Activated CD4-positive, alpha-beta T cell treated with anti-CD3 and anti-CD28 coated beads for 36 hours (primary cell): ENCODE measurements at regions of chr15 and their contacts with region 1.

Region 1: DNA sequence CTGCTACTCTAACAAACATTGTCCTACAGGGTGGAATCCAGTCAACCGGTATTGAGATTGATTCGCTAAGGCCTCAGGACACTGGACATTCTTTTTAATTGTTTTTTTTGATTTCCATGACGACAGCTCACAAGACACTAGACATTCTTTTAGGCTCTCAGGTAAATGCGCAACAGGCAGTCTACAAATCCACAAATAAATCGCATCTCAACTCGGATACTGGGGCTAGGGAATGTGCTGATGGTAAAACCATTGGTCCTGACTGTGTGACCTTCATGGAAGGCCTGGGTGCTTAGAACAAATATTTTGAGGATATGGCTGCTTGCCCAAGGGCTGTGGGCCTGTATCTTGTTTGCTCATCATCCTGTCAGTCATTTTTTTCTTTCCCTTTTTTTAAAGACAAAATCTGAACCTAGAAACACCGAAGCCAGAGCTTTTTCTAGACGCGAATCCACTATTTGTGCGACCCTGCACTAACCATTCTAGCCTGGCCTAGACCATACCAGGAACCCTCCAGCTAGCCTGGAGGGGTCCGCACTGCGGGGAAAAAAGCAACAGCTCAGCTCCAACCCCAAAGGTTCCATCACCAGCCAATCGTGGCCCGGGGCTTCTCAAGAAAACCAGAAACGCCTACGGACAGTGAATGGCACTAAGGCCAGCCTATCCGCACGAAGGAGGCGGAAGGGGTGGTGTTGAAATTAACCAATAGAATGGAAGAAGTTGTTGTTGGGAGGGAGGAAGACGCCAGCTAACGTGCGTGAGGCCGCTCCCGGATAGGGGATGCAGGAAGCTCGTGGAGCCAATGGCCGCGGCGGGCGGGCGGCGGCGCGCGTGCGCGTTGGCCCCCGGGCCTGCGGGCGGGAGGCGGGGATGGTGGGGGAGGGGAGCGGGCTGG is 18.1 kb upstream of the CHD2 start:
- DNase-seq: peak; percentile 98
- ATAC-seq: peak; percentile 93
- H3K4me3 Mint-ChIP-seq: peak overlapping the region; percentile 84
- H3K27ac Mint-ChIP-seq: peak overlapping the region; percentile 96
- H3K4me1 Mint-ChIP-seq: peaks cover 48% of the 10 kb centered on the region
- H3K27me3 Mint-ChIP-seq: no peaks in the 10 kb centered on the region

Region 2: GRCh38 chr15:92803847-92804609 is 78.0 kb before region 1 on chr15:
- CTCF ChIA-PET with region 1: interaction called, 45 read pairs
- POLR2A ChIA-PET with region 1: interaction called, 86 read pairs
- intact Hi-C with region 1: loop called (anchors 1 kb)
- DNase-seq: peak; percentile 91
- ATAC-seq: peak; percentile 86
- H3K4me3 Mint-ChIP-seq: peak overlapping the region; percentile 17
- H3K27ac Mint-ChIP-seq: peak overlapping the region; percentile 94
- H3K4me1 Mint-ChIP-seq: peaks cover 36% of the 10 kb centered on the region
- H3K27me3 Mint-ChIP-seq: no peaks in the 10 kb centered on the region

Region 3: DNA sequence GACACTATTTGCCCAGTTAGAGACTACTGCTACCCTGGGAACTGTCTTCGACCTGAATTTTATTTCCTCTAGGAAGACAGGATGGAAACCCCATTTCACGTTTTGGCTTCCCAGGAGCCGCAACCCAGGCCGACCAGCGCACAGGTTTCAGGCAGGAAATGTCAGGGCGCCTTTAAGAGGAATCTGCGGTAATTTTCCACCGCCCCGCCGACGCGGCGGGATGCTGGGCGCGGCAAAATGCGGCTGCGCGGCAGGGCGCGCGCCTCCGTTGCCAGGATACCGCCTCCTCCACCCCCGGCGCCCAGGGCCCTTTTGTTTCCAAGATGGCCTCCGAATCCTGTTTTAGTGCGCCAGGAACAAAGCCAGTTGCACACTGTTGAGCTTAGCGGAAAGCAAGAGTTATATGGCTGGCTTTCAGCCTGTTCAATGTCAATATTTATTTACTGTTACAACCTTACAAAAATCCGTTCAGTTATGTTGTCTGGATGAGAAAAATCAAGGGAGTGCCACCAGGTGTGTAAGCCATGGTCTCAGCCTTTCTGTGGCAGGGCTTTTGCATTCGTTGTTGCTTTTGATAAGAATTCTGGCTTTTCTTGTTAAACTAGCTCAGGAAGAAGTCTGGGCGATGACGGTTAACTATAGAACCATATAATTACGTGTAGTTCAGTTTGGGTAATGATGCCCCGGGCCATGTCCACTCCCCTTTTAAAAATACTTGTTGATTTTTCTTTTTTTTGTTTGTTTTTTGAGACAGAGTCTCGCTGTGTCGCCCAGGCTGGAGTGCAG is 61.6 kb before region 1 on chr15:
- CTCF ChIA-PET with region 1: interaction called, 14 read pairs
- POLR2A ChIA-PET with region 1: interaction called, 31 read pairs
- intact Hi-C with region 1: loop called (anchors 1 kb)
- DNase-seq: peak; percentile 92
- ATAC-seq: peak; percentile 63
- H3K4me3 Mint-ChIP-seq: peak overlapping the region; percentile 82
- H3K27ac Mint-ChIP-seq: peak overlapping the region; percentile 77
- H3K4me1 Mint-ChIP-seq: peaks cover 64% of the 10 kb centered on the region
- H3K27me3 Mint-ChIP-seq: no peaks in the 10 kb centered on the region

Region 4: GRCh38 chr15:92845126-92845508 is 36.9 kb before region 1 on chr15:
- CTCF ChIA-PET with region 1: interaction called, 4 read pairs
- POLR2A ChIA-PET with region 1: interaction called, 27 read pairs
- intact Hi-C with region 1: loop called (anchors 1 kb)
- DNase-seq: no peak
- ATAC-seq: peak; percentile 43
- H3K4me3 Mint-ChIP-seq: peak overlapping the region; percentile 57
- H3K27ac Mint-ChIP-seq: peak overlapping the region; percentile 99
- H3K4me1 Mint-ChIP-seq: peaks cover 79% of the 10 kb centered on the region
- H3K27me3 Mint-ChIP-seq: no peaks in the 10 kb centered on the region

Region 5: GRCh38 chr15:92868992-92869988 is 12.8 kb before region 1 on chr15:
- CTCF ChIA-PET with region 1: interaction called, 10 read pairs
- POLR2A ChIA-PET with region 1: no interaction called
- intact Hi-C with region 1: no loop called
- DNase-seq: no peak
- ATAC-seq: no peak
- H3K4me3 Mint-ChIP-seq: no peak overlapping the region
- H3K27ac Mint-ChIP-seq: no peak overlapping the region
- H3K4me1 Mint-ChIP-seq: no peaks in the 10 kb centered on the region
- H3K27me3 Mint-ChIP-seq: no peaks in the 10 kb centered on the region

Region 6: DNA sequence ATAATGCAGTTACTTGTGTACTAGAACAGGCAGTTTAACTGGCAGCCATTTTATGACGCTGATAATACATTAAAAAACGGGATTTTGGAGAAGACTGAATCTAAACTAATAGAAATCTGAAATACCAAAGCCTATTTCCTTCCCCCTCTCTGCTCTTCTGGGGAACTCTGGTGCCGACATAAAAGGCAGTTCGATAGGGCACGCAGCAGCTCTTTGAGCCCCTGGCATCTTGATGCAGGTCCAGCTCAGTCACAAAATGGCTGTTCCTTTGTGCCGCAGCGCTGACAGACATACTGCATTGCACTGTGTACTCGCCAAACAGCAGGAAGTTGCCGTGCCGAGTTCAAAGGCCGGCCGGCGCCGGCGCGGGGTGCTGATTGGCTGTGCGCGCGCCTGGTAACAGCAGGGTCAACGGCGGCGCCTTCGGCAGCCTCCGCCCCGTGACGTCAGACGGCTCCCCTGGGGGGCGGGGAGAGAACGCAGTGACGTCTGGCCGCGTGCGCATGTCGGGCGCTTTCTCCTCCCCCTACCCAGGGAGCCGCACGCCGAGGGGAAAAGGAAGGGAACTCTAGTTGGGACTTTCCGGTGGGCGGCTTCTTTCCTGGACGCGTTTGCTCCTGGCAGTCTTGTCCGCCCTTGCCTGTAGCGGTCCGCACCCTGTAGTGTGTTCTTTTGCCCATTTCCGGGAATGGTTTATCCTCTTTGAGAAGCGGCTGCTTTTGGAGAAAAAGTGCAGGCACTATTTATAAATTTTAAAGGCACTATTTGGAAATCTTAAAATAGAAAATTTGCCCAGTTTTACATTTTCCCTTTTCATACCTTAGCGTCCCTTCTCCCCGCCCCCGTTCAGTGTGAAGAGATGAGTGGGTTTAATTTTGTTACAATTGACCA is 22.1 kb after region 1 on chr15:
- CTCF ChIA-PET with region 1: interaction called, 61 read pairs
- POLR2A ChIA-PET with region 1: interaction called, 111 read pairs
- intact Hi-C with region 1: loop called (anchors 1 kb)
- DNase-seq: peak; percentile 100
- ATAC-seq: peak; percentile 80
- H3K4me3 Mint-ChIP-seq: peak overlapping the region; percentile 81
- H3K27ac Mint-ChIP-seq: peak overlapping the region; percentile 98
- H3K4me1 Mint-ChIP-seq: peaks cover 48% of the 10 kb centered on the region
- H3K27me3 Mint-ChIP-seq: no peaks in the 10 kb centered on the region

Region 7: GRCh38 chr15:92949604-92950249 is 67.7 kb after region 1 on chr15:
- CTCF ChIA-PET with region 1: no interaction called
- POLR2A ChIA-PET with region 1: no interaction called
- intact Hi-C with region 1: no loop called
- DNase-seq: no peak
- ATAC-seq: no peak
- H3K4me3 Mint-ChIP-seq: no peak overlapping the region
- H3K27ac Mint-ChIP-seq: peak overlapping the region; percentile 74
- H3K4me1 Mint-ChIP-seq: no peaks in the 10 kb centered on the region
- H3K27me3 Mint-ChIP-seq: no peaks in the 10 kb centered on the region